Naive thymus-derived CD4-positive, alpha-beta T cell (primary cell): ENCODE measurements at regions of chr4 and their contacts with region 1.

Region 1: DNA sequence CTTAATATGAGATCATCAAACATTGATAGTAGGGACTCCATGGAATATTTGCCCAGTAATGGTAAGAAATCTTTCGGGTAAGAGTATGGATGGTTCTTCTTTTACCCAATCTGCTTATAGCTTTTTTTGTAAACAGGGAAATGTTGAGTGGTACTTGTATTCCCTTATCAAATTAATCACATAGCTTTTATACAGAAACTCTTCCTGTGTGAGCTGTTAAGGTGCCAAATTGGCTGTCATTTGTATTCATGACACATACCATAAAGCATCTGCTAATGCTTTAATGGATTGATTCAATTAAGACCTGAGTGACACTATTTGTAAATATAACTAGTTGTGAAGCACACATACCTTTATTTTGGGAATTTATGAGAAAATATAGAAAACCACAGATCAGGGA is 34.2 kb downstream of the KLF3 start:
- DNase-seq: no peak
- ATAC-seq: no peak
- H3K4me3 ChIP-seq: no peak overlapping the region
- H3K4me3 Mint-ChIP-seq: no peak overlapping the region
- H3K27ac ChIP-seq: no peak overlapping the region
- H3K27ac Mint-ChIP-seq: peak overlapping the region in 3 of 9 donors; percentile 58 to 69 (median 58)
- H3K4me1 ChIP-seq: no peaks in the 10 kb centered on the region
- H3K4me1 Mint-ChIP-seq: peaks cover 0 to 43% (median 15%) of the 10 kb centered on the region in 7 donors
- H3K27me3 ChIP-seq: no peaks in the 10 kb centered on the region
- H3K27me3 Mint-ChIP-seq: peaks cover 0 to 5% (median 0%) of the 10 kb centered on the region in 5 donors

Region 2: DNA sequence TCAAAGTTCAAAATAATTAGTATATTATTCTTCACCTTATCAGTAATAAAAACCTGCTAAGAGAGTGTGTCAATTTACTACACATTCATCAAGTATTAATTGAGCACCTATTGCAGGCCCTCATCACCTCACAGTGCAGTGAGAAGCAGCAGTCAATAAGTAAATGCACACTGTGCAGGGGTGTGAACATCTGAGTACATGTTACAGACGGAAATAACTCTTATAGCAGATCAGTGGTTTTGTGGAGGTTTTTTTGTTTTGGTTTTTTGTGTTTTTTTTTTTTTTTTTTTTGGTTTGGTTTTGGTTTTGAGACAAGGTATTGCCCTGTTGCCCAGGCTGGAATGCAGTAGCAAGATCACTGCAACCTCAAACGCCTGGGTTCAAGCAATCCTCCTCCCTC is 13.9 kb before region 1 on chr4:
- CTCF ChIA-PET with region 1: no interaction called
- POLR2A ChIA-PET with region 1: interaction called, 4 read pairs
- intact Hi-C with region 1: loop called in 1 of 2 experiments (anchors 2 kb)
- DNase-seq: peak in 2 of 9 donors; percentile 54 to 56
- ATAC-seq: peak; percentile 79
- H3K4me3 ChIP-seq: no peak overlapping the region
- H3K4me3 Mint-ChIP-seq: peak overlapping the region; percentile 30 to 81 (median 59)
- H3K27ac ChIP-seq: no peak overlapping the region
- H3K27ac Mint-ChIP-seq: peak overlapping the region; percentile 40 to 87 (median 72)
- H3K4me1 ChIP-seq: peaks cover 32 to 60% of the 10 kb centered on the region in 2 donors
- H3K4me1 Mint-ChIP-seq: peaks cover 41 to 98% (median 94%) of the 10 kb centered on the region in 7 donors
- H3K27me3 ChIP-seq: no peaks in the 10 kb centered on the region
- H3K27me3 Mint-ChIP-seq: no peaks in the 10 kb centered on the region